Activated naive CD4-positive, alpha-beta T cell treated with anti-CD3 and anti-CD28 coated beads for 36 hours (primary cell): ENCODE measurements at regions of chr6 and their contacts with region 1.

Region 1: DNA sequence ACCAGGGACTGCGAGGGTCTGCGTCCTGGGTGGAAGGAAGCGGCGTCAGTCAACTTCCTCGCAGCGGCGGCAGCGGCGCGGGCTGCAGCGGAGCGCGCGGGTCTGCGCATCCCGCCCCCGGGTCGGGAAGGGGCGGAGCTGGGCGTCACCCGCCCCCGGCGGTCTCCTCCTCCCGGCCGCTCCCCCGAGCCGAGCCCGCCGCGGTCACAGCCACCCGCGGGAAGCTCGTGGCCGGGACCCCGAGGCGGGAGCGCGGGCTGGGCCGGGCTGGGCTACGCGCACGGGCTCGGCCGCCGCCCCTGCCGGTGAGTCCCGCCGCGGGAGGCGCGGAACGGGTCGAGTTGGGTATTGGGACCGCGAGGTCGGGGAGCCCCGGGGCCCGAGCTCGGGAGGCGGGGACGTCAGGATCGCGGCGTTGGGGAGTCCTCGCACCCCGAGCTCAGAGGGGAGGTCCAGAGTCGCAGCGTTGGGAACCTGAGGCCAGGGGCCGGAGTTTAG is at the start of gene PAQR8:
- DNase-seq: peak; percentile 81
- H3K4me3 Mint-ChIP-seq: peak within 1 kb of the TSS; percentile 94
- H3K27ac Mint-ChIP-seq: peak within 1 kb of the TSS; percentile 91
- H3K4me1 Mint-ChIP-seq: peaks cover 38% of the 10 kb centered on the region
- H3K27me3 Mint-ChIP-seq: no peaks in the 10 kb centered on the region
- total RNA-seq, gene PAQR8: 6.8 to 9.2 TPM

Region 2: GRCh38 chr6:52297433-52297832 is 64.6 kb before region 1 on chr6:
- CTCF ChIA-PET with region 1: interaction called, 6 read pairs
- intact Hi-C with region 1: loop called (anchors 2 kb)
- DNase-seq: peak; percentile 51
- H3K4me3 Mint-ChIP-seq: no peak overlapping the region
- H3K27ac Mint-ChIP-seq: peak overlapping the region; percentile 60
- H3K4me1 Mint-ChIP-seq: peaks cover 35% of the 10 kb centered on the region
- H3K27me3 Mint-ChIP-seq: no peaks in the 10 kb centered on the region

Region 3: DNA sequence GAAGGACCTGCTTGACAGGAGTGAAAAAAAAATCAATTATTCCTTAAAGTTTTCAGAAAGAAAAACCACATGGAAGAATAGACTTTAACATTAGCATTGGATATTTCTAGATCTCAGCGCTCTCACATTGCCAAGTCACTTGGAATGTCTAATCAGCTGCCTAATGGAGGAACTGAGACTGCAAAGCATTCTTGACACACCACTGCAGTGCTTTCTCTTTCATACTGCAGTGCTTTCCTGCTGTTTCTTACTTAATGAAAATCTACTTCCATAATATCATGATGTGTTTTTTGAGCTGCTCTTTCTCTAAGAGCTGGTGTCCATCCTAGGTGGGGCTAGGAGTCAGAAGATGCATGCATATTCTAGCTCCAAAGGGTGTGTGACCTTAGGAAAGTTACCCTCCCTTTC is 57.0 kb before region 1 on chr6:
- CTCF ChIA-PET with region 1: interaction called, 6 read pairs
- intact Hi-C with region 1: loop called (anchors 2 kb)
- DNase-seq: no peak
- H3K4me3 Mint-ChIP-seq: peak overlapping the region; percentile 27
- H3K27ac Mint-ChIP-seq: peak overlapping the region; percentile 77
- H3K4me1 Mint-ChIP-seq: peaks cover 65% of the 10 kb centered on the region
- H3K27me3 Mint-ChIP-seq: no peaks in the 10 kb centered on the region

Region 4: DNA sequence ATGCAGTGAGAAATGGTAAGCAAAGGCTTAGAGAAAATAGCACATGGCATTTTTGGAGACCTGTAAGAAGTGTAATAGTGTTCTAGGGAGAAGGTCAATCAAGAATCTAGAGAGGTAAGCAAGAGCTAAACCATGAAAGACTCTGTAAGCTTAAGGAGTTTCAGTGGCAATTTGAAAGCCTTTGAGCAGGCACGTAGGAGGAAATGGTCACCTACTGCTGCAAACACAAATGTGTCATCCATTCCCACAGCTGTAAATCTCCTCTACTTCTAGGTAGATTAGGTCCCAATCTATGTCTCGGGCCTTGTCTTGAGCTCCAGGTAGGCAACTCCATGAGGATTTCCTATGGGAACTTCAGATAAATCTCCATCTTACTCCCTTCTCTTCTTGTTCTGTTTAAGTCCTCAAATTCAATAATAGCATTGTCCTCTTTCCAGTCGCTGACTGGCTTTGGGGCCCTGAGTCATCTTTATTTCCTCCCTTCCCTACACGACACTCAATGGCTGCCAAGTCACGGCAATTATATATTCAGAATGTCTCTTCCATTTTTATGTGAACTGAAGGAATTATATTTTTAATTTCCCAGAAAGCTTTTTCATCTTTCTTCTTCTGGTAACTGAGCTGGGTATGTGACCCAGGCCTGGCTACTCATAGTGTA is 24.2 kb before region 1 on chr6:
- CTCF ChIA-PET with region 1: interaction called, 6 read pairs
- intact Hi-C with region 1: loop called (anchors 2 kb)
- DNase-seq: no peak
- H3K4me3 Mint-ChIP-seq: no peak overlapping the region
- H3K27ac Mint-ChIP-seq: no peak overlapping the region
- H3K4me1 Mint-ChIP-seq: peaks cover 56% of the 10 kb centered on the region
- H3K27me3 Mint-ChIP-seq: no peaks in the 10 kb centered on the region

Region 5: DNA sequence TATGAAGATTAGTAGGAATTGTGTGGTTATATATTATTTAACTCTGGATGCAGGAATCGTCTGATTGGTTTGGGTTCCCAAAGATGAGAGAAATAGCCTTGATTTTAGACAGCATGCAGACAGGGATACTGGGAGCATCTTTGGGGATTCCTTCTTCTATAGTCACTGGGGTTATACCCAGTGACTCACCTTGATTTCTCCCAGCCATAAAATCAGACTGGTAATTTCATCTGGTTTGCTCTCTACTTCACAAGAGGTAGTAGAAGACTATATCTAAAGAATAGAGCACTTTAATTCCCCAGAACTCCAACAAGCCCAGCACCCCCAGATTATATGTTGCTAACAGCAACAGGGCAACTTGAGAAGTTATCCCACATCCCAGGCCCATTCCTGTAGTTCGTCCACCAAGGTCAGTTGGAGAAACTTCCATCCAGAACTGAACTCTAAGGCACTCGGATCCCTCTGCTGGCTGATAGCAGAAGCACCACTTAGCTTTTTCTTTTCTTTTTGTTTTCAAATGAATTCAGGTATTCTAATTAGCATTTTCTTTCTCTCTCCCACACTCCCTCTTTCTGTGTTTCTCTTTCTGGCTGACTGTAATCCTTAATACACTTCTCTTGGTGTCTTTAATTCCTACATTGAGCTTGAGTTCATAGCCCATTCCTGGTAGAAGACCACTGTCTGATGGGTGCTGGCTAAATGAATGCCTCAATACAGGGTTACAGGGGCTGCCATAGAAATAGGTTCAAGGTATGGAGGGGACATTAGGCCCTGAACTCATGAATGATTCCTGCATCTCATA is 37.7 kb after region 1 on chr6:
- CTCF ChIA-PET with region 1: interaction called, 22 read pairs
- intact Hi-C with region 1: loop called (anchors 1 kb)
- DNase-seq: peak; percentile 64
- H3K4me3 Mint-ChIP-seq: no peak overlapping the region
- H3K27ac Mint-ChIP-seq: peak overlapping the region; percentile 73
- H3K4me1 Mint-ChIP-seq: peaks cover 72% of the 10 kb centered on the region
- H3K27me3 Mint-ChIP-seq: no peaks in the 10 kb centered on the region

Region 6: GRCh38 chr6:52610745-52611355 is 248.9 kb after region 1 on chr6:
- CTCF ChIA-PET with region 1: no interaction called
- intact Hi-C with region 1: no loop called
- DNase-seq: no peak
- H3K4me3 Mint-ChIP-seq: no peak overlapping the region
- H3K27ac Mint-ChIP-seq: no peak overlapping the region
- H3K4me1 Mint-ChIP-seq: no peaks in the 10 kb centered on the region
- H3K27me3 Mint-ChIP-seq: no peaks in the 10 kb centered on the region

Region 7: DNA sequence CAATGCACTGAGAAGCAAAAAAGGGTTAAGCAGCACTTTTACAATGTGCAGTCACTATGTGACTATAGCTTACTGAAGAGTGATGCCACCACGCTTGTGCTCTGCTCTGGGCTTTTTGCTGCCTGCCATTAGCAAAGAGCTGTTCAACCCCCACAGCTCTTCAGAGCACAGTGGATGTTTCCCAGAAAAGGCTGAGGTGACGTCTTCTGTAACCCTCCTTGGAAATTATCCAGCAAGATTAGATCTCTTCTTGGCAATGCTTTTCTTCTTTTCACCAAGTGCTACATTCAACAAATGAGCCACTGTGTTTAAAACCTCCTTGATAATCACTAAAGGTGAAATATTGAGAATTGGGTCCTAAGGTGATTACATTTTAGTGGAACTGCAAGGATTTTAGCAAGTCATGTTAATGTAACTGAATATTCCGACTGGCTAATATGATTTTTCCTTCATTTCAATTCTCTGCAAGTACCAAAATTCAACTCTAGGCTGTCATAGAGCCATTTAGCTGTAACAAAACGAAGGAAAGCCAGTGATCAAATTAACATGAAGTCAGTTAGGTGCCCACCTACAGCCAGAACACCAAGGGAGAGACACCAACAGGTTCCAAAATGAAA is 951.9 kb after region 1 on chr6:
- CTCF ChIA-PET with region 1: no interaction called
- intact Hi-C with region 1: no loop called
- DNase-seq: no peak
- H3K4me3 Mint-ChIP-seq: no peak overlapping the region
- H3K27ac Mint-ChIP-seq: no peak overlapping the region
- H3K4me1 Mint-ChIP-seq: peaks cover 80% of the 10 kb centered on the region
- H3K27me3 Mint-ChIP-seq: no peaks in the 10 kb centered on the region